ENCODE measurements at regions of chr7 and their contacts with region 1.

Region 1: DNA sequence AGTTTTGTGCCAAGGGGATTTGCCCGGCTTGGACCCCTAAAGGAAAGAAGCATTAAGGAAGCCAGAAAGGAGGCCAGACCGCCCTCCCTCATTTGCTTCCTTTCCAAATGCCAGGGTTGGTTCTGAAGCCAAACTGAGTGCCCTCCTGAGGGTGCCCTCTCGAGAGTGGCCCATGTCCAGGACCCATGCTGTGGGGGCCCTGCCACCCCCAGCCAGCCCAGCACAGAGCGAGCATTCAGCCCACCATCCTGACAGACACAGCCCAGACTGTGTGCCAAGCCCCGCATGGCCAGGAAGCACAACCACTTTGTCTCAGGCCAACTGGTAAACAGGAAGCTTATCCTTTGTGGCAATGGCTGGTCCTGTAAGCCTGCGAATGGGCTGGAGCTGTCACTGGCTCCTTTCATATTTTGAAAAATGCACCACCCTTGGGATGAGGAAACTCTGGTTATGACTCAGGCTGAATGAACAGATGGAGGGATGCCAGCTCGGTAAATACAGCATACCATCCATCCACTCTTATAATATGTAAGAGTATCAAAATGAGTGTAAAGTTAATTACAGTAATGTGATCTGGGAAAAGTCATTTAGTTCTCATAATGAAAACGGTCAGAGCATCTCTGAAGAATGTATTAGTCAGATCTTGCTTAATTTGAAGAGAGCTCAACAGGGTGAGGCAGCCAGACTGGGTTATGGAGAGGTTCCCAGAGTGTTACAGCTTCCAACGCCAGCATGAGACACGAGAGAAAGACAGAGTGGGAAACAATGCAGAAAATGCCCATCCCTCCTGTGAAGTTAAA is 65.0 kb downstream of the STK17A start:
- DNase-seq: peak in 1 of 2 donors; percentile 93
- H3K4me3 ChIP-seq: peak overlapping the region; percentile 43 to 60
- H3K27ac ChIP-seq: peak overlapping the region; percentile 94 to 96
- H3K4me1 ChIP-seq: peaks cover 42 to 70% of the 10 kb centered on the region in 2 donors
- H3K27me3 ChIP-seq: no peaks in the 10 kb centered on the region
- CTCF ChIP-seq: no peak

Region 2: DNA sequence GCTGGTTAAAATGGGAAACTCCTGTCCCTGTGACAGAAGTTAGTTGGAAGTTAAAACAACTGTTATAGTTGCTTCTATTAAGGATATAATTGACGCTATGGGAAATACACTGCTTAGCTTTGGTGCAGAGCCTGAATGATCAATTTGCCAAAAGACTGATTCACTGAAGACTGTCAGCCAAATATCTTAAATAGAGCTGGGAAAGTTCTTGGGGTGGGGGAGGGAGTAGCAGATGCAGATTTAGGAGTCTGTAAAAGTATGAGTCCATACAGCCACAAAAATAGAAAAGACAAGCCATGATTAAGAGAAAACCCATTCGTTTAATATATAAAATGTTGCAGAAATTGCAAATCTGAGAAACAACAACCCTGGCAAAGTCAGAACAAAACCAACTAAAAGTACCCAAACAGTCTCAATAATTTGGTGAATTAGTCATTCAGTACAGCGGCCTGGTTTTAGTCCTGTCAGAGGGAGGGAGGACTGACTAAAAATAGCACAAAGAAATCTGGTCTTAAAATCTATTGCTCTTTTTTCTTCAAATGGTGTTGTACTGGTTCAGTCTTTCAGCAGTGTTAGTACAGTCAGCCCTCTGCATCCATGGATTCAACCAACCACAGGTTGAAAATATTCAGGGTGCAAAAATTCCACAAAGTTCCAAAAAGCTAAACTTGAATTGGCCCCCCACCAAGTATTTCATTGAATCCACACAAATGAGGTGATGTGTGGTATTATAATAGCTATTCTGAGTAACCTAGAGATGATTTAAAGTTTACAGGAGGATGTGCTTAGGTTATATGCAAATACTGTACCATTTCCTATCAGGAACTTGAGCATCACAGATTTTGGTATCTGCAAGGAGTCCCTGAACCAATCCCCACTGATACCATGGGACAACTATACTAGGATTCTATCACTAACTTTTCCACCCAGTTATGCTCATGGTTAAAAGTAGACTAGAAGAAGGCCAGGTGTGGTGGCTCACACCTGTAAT is 35.0 kb before region 1 on chr7:
- intact Hi-C with region 1: loop called (anchors 5 kb)
- DNase-seq: no peak
- H3K4me3 ChIP-seq: peak overlapping the region in 1 of 2 donors; percentile 24
- H3K27ac ChIP-seq: peak overlapping the region; percentile 75 to 80
- H3K4me1 ChIP-seq: peaks cover 13 to 37% of the 10 kb centered on the region in 2 donors
- H3K27me3 ChIP-seq: no peaks in the 10 kb centered on the region
- CTCF ChIP-seq: no peak

Region 3: DNA sequence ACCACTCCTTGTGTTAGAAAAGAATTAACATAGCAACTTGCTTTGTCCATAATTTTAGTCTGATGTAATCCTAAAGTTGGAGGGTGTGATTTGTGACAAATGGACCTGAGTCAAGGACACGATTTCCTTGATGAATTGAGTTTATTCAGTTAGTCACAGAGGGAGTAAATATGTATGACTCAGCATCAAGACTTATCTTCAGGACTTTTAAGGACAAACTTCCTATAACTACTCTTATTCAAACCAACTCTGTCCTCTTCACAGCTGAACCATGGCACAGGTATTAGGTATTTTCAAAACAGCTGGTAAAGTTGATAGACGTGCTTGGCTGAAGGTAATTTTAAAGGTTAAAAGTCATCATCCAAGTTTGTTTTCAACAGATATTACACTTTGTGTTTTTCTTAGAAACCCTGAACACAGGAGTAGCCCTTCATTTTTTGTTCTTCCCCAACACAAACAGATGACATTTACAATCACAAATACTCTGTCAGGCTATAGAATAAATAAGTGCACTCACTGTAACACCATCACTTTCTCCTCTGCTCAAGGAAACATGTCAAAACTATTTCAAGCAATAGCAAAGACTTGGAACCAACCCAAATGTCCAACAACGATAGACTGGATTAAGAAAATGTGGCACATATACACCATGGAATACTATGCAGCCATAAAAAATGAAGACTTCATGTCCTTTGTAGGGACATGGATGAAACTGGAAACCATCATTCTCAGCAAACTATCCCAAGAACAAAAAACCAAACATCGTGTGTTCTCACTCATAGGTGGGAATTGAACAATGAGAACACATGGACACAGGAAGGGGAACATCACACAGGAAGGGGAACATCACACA is 26.9 kb after region 1 on chr7:
- intact Hi-C with region 1: loop called (anchors 5 kb)
- DNase-seq: no peak
- H3K4me3 ChIP-seq: no peak overlapping the region
- H3K27ac ChIP-seq: peak overlapping the region; percentile 8 to 49
- H3K4me1 ChIP-seq: peaks cover 0 to 5% of the 10 kb centered on the region in 2 donors
- H3K27me3 ChIP-seq: no peaks in the 10 kb centered on the region
- CTCF ChIP-seq: no peak

Region 4: DNA sequence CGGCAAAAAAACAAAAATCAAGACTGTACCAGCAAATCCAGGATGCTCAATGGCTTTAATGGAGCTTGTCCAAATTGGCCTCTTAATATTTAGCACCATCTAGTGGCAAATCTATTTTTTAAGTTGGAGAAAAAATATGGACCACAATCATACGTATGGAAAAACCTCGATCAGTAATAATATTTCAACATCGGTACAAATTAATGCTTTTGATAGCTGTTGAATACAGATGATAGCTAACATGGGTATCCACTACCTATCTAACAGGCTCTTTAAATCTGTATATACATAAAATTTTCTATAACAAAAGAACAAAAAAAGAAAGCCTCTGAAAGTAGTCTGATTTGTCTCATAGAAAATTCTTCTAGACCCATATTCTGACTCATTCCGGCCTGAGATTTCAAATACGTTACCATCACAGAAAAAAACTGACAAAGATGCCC is 52.2 kb after region 1 on chr7:
- intact Hi-C with region 1: loop called (anchors 2 kb)
- DNase-seq: no peak
- H3K4me3 ChIP-seq: peak overlapping the region in 1 of 2 donors; percentile 39
- H3K27ac ChIP-seq: no peak overlapping the region
- H3K4me1 ChIP-seq: no peaks in the 10 kb centered on the region
- H3K27me3 ChIP-seq: no peaks in the 10 kb centered on the region
- CTCF ChIP-seq: peak; percentile 56 to 75 (median 60)

Region 5: DNA sequence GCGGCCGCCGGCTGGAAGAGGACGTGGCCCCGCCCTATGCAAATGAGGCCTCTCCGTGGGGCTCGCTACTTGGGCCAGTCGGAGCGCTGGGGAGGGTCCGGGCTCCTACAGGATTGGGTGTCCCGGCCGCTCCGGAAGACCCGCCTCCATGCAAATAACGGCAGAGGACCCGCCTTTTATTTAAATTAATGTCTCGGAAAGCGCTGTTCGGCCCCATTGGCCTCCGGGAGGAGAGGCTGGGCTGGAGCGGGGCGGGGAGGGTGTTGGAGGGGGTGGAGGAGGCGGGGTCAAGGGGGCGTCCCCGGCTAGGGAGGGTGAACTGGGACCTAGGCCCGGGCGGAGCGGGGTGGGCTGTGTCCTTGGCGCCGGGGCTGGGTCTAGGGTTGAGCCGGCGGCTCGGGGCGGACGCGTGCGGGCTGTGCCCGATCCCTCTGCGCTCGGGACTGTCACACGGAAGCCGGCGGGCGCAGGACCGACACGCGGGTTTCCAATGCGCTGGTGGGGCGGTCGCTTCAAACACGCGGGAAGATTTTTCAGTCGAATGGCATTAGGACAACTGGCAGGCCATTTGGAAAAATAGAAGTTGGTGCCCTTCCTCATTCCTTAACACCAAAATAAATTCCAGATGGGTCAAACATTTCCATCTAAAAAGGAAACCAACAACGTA is 434.8 kb after region 1 on chr7:
- intact Hi-C with region 1: no loop called
- DNase-seq: peak; percentile 98 to 100
- H3K4me3 ChIP-seq: peak overlapping the region; percentile 66 to 84
- H3K27ac ChIP-seq: peak overlapping the region; percentile 91 to 100
- H3K4me1 ChIP-seq: peaks cover 18 to 56% of the 10 kb centered on the region in 2 donors
- H3K27me3 ChIP-seq: no peaks in the 10 kb centered on the region
- CTCF ChIP-seq: no peak

Measured in ascending aorta (tissue), 2 donors.